ENCODE measurements at regions of chr10 and their contacts with region 1.

Region 1: GRCh38 chr10:72364239-72364777 is 9.6 kb upstream of the DNAJB12 start:
- DNase-seq: peak; percentile 96
- H3K4me3 Mint-ChIP-seq: peak overlapping the region; percentile 21
- H3K27ac Mint-ChIP-seq: no peak overlapping the region
- H3K4me1 Mint-ChIP-seq: peaks cover 20% of the 10 kb centered on the region
- H3K27me3 Mint-ChIP-seq: peaks cover 6% of the 10 kb centered on the region

Region 2: DNA sequence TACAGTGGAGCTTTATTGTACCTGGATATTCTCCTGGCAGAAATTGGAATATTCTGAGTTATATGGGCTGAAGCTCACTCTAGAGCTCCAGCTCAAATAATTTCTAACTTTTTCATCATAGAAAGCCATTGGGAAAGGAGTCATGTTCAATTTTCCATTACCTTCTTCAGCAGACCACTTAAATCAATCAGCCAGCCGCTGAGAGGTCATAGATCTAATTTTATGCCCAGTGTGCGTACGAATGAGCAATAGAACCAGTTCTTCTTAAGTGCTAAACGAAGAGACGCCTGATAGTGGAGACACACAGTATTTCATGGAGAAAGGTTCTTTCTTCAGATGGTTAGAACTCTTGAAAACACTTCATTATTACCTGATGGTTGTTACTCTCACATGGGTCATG is 25.4 kb after region 1 on chr10:
- intact Hi-C with region 1: no loop called
- DNase-seq: no peak
- H3K4me3 Mint-ChIP-seq: no peak overlapping the region
- H3K27ac Mint-ChIP-seq: no peak overlapping the region
- H3K4me1 Mint-ChIP-seq: no peaks in the 10 kb centered on the region
- H3K27me3 Mint-ChIP-seq: no peaks in the 10 kb centered on the region

Region 3: GRCh38 chr10:72563327-72563932 is 199.1 kb after region 1 on chr10:
- intact Hi-C with region 1: loop called (anchors 5 kb)
- DNase-seq: peak; percentile 79
- H3K4me3 Mint-ChIP-seq: peak overlapping the region; percentile 75
- H3K27ac Mint-ChIP-seq: peak overlapping the region; percentile 96
- H3K4me1 Mint-ChIP-seq: peaks cover 41% of the 10 kb centered on the region
- H3K27me3 Mint-ChIP-seq: no peaks in the 10 kb centered on the region

Region 4: GRCh38 chr10:72625608-72626443 is 261.5 kb after region 1 on chr10 and contains the start of gene MICU1:
- intact Hi-C with region 1: loop called (anchors 1 kb)
- DNase-seq: peak; percentile 98
- H3K4me3 Mint-ChIP-seq: peak within 1 kb of the TSS; percentile 94
- H3K27ac Mint-ChIP-seq: peak within 1 kb of the TSS; percentile 96
- H3K4me1 Mint-ChIP-seq: peaks cover 7% of the 10 kb centered on the region
- H3K27me3 Mint-ChIP-seq: no peaks in the 10 kb centered on the region
- total RNA-seq, gene MICU1: 36.1 and 40.7 TPM in 2 replicates

Region 5: DNA sequence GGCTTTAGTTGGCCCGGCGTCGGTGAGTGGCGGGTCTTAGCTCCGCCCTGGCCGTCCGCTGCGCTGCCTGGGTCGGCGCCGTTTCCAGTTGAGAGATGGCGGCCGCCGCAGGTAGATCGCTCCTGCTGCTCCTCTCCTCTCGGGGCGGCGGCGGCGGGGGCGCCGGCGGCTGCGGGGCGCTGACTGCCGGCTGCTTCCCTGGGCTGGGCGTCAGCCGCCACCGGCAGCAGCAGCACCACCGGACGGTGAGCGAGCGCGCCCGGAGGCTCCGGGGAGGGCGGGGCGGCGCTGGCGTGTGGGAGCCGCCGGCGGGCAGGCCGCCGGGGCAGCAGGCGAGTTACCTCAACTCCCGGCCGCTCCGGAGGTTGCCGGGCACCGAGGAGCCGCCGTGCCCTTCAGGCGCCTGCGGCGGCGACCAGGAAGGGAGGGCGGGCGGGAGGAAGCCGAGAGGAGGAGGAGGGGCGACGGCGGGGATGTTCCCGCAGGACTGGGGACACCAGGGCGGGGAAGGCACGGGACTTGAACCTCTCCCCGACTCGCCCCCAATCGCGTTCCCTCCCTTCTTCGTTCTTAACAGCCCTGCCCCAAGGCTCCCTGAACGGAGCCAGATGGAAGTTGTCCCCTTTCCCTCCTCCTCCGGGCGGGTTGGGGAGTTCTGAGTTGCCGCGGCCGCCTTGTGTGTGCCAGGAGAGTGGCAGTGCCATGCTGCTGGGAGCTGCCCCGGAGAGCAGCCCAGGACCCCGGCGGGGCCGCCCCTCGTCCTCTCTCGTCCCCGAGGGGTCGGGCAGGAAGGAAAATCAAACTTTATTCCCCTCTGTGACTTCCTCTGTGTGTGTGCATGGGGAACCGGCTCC is 328.0 kb after region 1 on chr10 and contains the start of gene MCU:
- intact Hi-C with region 1: loop called (anchors 2 kb)
- DNase-seq: peak; percentile 98
- H3K4me3 Mint-ChIP-seq: peak within 1 kb of the TSS; percentile 88
- H3K27ac Mint-ChIP-seq: peak within 1 kb of the TSS; percentile 54
- H3K4me1 Mint-ChIP-seq: peaks cover 29% of the 10 kb centered on the region
- H3K27me3 Mint-ChIP-seq: peaks cover 8% of the 10 kb centered on the region
- total RNA-seq, gene MCU: 13.5 and 15.9 TPM in 2 replicates

Region 6: DNA sequence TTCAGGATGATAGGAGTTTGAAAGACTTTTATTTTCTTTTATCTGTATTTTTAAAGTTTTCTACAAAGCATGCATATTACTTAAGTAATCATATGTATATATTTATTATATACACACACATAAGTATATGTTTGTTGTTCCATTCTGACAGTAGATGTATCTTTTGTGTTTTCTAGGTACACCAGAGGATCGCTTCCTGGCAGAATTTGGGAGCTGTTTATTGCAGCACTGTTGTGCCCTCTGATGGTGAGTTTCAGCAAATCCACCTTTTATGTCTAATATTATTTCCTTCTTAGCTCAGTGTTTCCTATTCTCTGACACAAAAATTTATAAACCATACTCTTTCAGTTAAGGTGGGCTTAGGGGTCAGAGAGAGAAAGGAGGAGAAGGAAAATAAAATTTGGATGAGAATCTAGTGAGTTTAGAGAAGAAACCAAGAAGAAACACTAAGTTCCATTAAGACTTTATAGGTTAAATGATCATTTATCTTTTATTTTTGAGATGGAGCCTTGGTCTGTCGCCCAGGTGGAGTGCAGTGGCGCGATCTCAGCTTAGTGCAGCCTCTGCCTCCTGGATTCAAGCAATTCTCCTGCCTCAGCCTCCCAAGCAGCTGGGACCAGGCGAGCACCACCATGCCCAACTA is 470.0 kb after region 1 on chr10:
- intact Hi-C with region 1: loop called (anchors 1 kb)
- DNase-seq: peak; percentile 80
- H3K4me3 Mint-ChIP-seq: no peak overlapping the region
- H3K27ac Mint-ChIP-seq: no peak overlapping the region
- H3K4me1 Mint-ChIP-seq: no peaks in the 10 kb centered on the region
- H3K27me3 Mint-ChIP-seq: no peaks in the 10 kb centered on the region

Region 7: GRCh38 chr10:72875250-72876055 is 511.1 kb after region 1 on chr10:
- intact Hi-C with region 1: loop called (anchors 1 kb)
- DNase-seq: peak; percentile 64
- H3K4me3 Mint-ChIP-seq: no peak overlapping the region
- H3K27ac Mint-ChIP-seq: no peak overlapping the region
- H3K4me1 Mint-ChIP-seq: no peaks in the 10 kb centered on the region
- H3K27me3 Mint-ChIP-seq: no peaks in the 10 kb centered on the region

Region 8: DNA sequence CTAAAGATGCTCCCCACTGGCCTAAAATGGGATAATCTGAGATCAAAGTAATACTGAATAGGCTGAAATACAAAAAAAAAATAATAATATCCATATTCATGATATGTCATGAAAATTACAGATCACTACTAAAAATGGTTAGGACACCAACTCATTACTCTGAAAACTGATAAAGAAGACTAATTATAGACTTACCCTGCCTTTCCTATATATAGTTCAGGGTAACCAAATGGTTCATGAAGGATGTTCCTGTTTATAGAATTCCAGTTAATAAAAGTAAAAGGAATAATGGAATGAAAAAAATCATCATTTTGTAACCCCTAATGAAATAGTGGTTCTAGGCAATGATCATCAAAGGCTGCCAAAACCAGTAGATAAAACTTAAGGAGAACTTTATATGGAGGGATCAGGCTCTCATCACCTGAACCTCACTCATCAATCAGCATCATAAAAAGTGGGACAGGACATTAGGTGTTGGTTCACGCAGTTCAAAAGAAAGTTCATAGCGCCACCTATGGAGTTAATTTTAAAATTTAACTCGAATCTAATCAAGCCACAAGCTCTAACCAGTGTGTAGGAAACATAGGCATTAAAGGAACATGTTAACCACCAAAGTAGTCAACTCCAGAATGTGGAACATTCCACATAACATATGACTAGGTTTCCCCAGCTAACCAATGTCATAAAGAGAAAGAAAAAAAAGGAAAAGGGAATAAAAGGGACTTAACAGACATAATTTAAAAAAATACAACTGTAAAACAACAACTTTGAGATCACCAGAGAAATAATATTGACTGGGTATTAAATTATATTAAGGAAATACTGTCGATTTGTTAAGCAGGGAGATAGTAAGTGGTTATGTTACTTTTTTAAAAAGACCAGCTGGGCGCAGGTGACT is 696.7 kb after region 1 on chr10:
- intact Hi-C with region 1: loop called (anchors 1 kb)
- DNase-seq: no peak
- H3K4me3 Mint-ChIP-seq: no peak overlapping the region
- H3K27ac Mint-ChIP-seq: peak overlapping the region; percentile 80
- H3K4me1 Mint-ChIP-seq: peaks cover 21% of the 10 kb centered on the region
- H3K27me3 Mint-ChIP-seq: no peaks in the 10 kb centered on the region